ENCODE measurements at regions of chr14 and their contacts with region 1.

Region 1: DNA sequence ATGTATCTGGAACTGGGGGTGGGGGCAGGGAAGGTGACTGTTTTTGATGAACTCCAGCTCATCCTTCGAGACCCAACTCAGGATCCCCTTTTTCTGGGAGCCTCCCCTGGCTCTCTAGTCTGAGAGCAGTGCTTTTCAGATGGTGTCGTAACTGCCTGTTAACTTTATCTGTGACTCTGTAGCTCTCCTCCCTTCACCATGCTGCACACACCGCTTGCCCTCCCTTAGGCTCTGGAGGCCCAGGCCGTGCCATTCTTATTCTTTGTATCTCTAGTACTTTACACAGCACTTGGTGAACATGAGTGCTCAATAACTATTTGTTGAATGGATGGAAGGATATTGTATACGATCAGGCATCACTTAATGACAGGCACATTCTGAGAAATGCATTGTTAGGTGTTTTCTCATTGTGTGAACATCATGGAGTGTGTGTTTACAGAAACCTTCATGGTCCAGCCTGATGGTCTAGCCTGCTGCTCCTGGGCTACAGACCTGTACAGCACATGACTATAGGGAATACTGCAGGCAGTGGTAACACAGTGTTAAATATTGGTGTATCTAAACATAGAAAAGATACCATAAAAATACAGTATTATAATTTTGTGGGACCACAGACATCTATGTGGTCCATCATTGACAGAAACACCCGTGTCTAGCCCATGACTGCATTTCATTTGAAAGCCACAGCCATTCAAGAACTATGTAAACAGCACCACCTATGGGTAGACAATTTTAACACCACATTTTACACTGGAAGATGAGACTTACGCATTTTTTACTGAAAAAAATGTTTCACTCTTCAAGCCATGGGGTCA is 91.8 kb downstream of the EML1 start:
- DNase-seq: peak; percentile 10 to 19 (median 15)
- H3K4me3 ChIP-seq: no peak overlapping the region
- H3K4me3 Mint-ChIP-seq: no peak overlapping the region
- H3K27ac ChIP-seq: no peak overlapping the region
- H3K27ac Mint-ChIP-seq: no peak overlapping the region
- H3K4me1 ChIP-seq: no peaks in the 10 kb centered on the region
- H3K4me1 Mint-ChIP-seq: no peaks in the 10 kb centered on the region
- H3K27me3 ChIP-seq: peaks cover 0 to 6% of the 10 kb centered on the region in 2 donors
- H3K27me3 Mint-ChIP-seq: peaks cover 4 to 18% (median 11%) of the 10 kb centered on the region in 3 donors
- CTCF ChIP-seq: peak; percentile 77

Region 2: DNA sequence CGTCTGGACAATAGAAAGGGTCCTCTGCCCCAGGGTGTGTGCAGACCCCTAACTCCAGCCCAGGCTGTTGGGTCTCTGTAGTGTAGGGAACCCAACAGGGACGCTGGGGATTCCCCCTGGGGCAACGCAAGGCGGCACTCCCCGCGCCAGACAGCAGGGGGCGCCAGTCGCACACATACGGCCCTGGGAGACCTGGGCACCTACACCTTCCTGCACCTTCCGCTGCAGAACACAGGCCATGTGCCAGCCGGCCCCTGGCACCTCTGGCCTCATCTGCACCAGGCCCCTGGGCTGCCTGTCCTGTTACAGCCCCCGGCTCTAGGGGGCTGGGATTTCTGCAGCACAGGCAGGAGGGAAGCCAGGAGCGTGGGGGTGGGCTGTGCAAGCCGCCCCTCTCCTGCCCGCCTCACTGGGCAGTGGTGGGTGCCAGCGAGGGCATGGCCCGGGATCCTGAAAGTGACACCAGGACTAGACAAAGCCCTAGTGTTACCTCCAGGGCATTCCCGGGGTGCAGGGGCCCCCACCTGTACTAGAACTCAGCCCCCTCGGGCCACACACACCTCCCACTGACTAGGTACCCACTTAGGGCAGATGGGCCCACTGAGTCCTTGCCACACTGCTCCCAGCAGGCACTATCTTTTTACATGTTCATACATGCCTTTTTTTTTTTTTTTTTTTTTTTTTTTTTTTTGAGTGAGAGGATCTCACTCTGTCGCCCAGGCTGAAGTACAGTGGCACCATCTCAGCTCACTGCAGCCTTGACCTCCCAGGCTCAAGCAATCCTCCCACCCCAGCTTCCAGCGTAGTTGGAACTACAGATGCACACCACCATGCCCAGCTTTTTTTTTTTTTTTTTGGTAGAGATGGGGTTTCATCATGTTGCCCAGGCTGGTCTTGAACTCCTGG is 366.3 kb before region 1 on chr14:
- intact Hi-C with region 1: loop called (anchors 2 to 5 kb)
- DNase-seq: peak; percentile 32 to 64 (median 50)
- H3K4me3 ChIP-seq: no peak overlapping the region
- H3K4me3 Mint-ChIP-seq: no peak overlapping the region
- H3K27ac ChIP-seq: no peak overlapping the region
- H3K27ac Mint-ChIP-seq: no peak overlapping the region
- H3K4me1 ChIP-seq: no peaks in the 10 kb centered on the region
- H3K4me1 Mint-ChIP-seq: peaks cover 2% of the 10 kb centered on the region
- H3K27me3 ChIP-seq: no peaks in the 10 kb centered on the region
- H3K27me3 Mint-ChIP-seq: peaks cover 0 to 9% (median 5%) of the 10 kb centered on the region in 3 donors
- CTCF ChIP-seq: peak; percentile 98

Region 3: DNA sequence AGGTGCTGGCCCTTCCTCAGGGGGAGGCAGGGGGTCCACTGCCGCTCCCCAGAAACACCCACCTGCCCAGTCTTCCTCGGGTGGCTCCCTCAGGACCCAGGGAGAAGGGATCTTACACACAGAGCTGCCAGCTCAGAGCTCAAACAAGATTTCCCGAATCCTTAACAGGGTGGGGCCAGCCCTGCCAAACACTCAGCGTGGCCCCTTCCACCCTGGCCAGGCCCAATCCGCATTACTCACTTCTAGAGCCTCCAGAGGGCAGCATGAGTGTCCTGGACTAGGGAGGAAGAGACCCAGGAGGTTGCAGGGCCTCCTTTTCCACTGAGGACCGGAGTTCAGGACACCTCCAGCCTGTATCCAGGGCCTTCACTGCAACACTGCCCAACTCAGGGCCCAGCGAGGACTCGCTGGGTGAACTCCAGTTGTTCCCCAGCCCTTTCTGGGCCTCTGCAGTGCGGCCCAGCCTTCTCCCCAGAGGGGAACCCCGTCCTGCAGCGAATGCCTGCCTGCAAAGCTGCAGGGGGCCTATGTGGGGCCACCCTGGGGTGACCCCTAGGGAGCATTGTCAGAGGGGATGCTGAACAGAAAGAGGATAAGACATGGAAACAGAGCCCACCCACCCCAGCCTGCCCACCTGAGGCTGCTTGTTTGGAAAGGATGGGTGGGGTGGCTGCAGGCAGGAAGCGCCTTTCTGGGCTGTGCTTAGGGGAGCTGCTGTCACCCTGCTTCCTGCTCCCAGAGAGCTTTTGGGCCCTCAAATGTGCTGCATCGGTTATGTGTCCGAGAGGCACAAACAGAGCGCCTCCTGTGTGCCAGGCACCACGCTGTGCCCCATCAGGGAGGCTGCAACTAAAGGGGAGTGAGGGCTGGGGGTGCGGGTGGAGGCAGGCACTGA is 360.0 kb before region 1 on chr14:
- intact Hi-C with region 1: loop called in 1 of 2 experiments (anchors 5 kb)
- DNase-seq: no peak
- H3K4me3 ChIP-seq: no peak overlapping the region
- H3K4me3 Mint-ChIP-seq: no peak overlapping the region
- H3K27ac ChIP-seq: no peak overlapping the region
- H3K27ac Mint-ChIP-seq: no peak overlapping the region
- H3K4me1 ChIP-seq: no peaks in the 10 kb centered on the region
- H3K4me1 Mint-ChIP-seq: no peaks in the 10 kb centered on the region
- H3K27me3 ChIP-seq: no peaks in the 10 kb centered on the region
- H3K27me3 Mint-ChIP-seq: peaks cover 0 to 5% (median 1%) of the 10 kb centered on the region in 3 donors
- CTCF ChIP-seq: no peak

Region 4: GRCh38 chr14:99853206-99853605 is 31.8 kb before region 1 on chr14:
- intact Hi-C with region 1: no loop called
- DNase-seq: no peak
- H3K4me3 ChIP-seq: no peak overlapping the region
- H3K4me3 Mint-ChIP-seq: no peak overlapping the region
- H3K27ac ChIP-seq: no peak overlapping the region
- H3K27ac Mint-ChIP-seq: no peak overlapping the region
- H3K4me1 ChIP-seq: no peaks in the 10 kb centered on the region
- H3K4me1 Mint-ChIP-seq: no peaks in the 10 kb centered on the region
- H3K27me3 ChIP-seq: no peaks in the 10 kb centered on the region
- H3K27me3 Mint-ChIP-seq: peaks cover 6 to 35% (median 12%) of the 10 kb centered on the region in 3 donors
- CTCF ChIP-seq: no peak